Activated CD4-positive, alpha-beta T cell treated with anti-CD3 and anti-CD28 coated beads for 36 hours (primary cell): ENCODE measurements at regions of chr19 and their contacts with region 1.

Region 1: DNA sequence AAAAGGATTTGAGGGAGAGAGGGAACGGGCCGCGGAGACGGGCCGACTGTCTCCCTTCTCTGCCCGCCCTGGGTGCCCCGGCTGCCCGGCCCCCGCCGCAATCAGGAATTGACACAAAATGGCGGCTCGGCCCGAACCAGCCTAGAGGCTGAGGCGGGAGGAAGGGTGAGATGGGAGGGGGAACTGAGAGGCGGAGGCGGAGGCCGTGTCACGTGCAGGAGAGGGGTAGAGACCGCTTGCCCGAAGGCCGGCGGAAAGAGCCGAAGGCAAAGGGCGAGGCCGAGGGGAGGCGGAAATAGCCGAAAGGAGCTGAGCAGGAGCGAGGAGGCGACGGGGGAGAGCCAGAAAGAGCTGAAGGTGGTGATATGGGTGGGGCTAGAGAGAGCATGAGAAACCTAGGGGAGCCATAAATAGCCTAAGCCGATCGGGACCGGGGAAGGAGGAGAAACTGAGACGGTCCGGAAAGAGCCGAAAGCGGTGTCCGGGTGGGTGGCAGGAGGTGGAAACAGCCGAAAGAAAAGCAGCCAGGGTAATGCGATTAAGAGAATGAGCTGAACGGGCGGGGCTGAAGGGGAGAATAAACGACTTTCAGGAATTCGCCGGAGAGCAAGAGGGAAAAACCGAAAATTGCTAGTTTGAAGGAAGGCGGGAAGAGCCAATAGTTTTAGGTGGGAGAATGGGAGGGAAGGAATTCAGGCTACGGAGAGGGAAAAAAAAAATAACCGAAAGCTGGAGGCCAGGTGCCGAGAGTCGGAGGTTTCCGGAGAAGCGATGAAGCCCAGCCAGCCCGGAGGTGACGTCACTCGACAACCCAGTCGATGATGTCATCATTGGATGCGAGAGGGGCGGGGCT is at the start of gene ZC3H4:
- DNase-seq: peak; percentile 100
- ATAC-seq: peak; percentile 91
- H3K4me3 Mint-ChIP-seq: peak within 1 kb of the TSS; percentile 93
- H3K27ac Mint-ChIP-seq: peak within 1 kb of the TSS; percentile 100
- H3K4me1 Mint-ChIP-seq: peaks cover 24% of the 10 kb centered on the region
- H3K27me3 Mint-ChIP-seq: no peaks in the 10 kb centered on the region
- total RNA-seq, gene ZC3H4: 88.6 to 128 TPM

Region 2: DNA sequence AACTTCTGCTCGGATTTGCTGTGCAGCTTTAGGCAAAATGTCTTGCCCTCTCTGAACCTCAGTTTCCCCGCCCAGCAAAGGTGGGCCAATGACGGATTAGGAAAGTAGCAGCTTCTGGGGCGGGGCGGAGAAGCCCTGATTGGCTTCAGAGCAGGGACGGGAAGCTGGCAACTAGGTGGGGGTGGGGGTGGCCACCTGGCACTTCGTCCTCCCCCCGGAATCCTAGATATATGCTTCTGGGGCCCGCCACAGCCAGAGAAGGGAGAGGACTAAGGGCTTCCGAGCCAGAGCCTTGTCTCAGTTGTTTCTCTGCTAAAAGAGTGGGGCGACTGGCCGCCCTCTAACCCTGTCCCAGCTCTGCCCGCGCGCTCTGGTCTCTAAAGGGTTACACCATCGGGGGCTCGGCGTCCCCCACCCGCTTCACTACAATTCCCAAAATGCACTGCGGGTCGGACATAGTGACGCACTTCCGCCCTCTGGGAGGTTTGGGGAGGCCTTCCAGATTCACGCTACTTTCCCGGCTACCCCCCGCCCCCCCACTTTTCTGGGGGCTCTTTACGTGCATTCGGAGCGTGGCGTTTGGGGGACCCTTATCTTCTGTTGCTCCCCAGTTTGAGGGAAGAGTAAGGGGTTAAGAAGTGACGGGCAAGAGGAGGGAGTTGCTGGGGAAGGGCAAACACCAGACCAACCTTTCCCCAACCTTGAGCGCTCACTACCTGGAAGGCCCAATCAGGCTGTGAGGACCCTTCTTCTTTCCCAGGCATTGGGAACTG is 1226.6 kb before region 1 on chr19:
- CTCF ChIA-PET with region 1: no interaction called
- POLR2A ChIA-PET with region 1: no interaction called
- intact Hi-C with region 1: loop called in 1 of 2 experiments (anchors 5 kb)
- DNase-seq: peak; percentile 96
- ATAC-seq: peak; percentile 85
- H3K4me3 Mint-ChIP-seq: peak overlapping the region; percentile 85
- H3K27ac Mint-ChIP-seq: peak overlapping the region; percentile 95
- H3K4me1 Mint-ChIP-seq: peaks cover 17% of the 10 kb centered on the region
- H3K27me3 Mint-ChIP-seq: no peaks in the 10 kb centered on the region

Region 3: DNA sequence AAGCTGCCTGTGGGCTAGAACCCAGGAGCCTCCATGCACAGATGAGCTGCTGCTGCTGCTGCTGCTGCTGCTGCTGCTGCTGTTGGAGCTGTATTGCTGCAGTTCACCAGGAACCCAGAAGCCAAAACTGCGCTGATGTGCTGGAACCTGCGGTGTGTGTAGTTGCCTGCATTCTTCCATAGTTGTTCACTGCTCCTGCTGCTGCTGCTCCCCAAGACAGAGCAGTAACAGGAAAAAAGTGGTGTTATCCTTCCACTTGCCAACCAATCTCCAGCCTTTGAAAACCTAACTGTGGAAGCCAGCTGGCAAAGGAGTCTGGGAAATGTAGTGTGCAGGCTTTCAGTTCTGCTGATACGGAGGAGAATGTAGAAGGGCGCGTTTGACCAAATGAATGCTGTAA is 214.5 kb before region 1 on chr19:
- CTCF ChIA-PET with region 1: no interaction called
- POLR2A ChIA-PET with region 1: no interaction called
- intact Hi-C with region 1: no loop called
- DNase-seq: no peak
- ATAC-seq: no peak
- H3K4me3 Mint-ChIP-seq: no peak overlapping the region
- H3K27ac Mint-ChIP-seq: no peak overlapping the region
- H3K4me1 Mint-ChIP-seq: peaks cover 32% of the 10 kb centered on the region
- H3K27me3 Mint-ChIP-seq: no peaks in the 10 kb centered on the region

Region 4: GRCh38 chr19:47035127-47036096 is 77.8 kb before region 1 on chr19:
- CTCF ChIA-PET with region 1: interaction called, 3 read pairs
- POLR2A ChIA-PET with region 1: interaction called, 4 read pairs
- intact Hi-C with region 1: loop called in 1 of 2 experiments (anchors 1 kb)
- DNase-seq: peak; percentile 96
- ATAC-seq: peak; percentile 93
- H3K4me3 Mint-ChIP-seq: peak overlapping the region; percentile 73
- H3K27ac Mint-ChIP-seq: peak overlapping the region; percentile 80
- H3K4me1 Mint-ChIP-seq: peaks cover 22% of the 10 kb centered on the region
- H3K27me3 Mint-ChIP-seq: peaks cover 4% of the 10 kb centered on the region

Region 5: GRCh38 chr19:47130591-47131227 is 17.5 kb after region 1 on chr19 and contains the start of gene SAE1:
- CTCF ChIA-PET with region 1: interaction called, 16 read pairs
- POLR2A ChIA-PET with region 1: interaction called, 15 read pairs
- intact Hi-C with region 1: loop called (anchors 1 to 2 kb)
- DNase-seq: peak; percentile 95
- ATAC-seq: peak; percentile 89
- H3K4me3 Mint-ChIP-seq: peak within 1 kb of the TSS; percentile 99
- H3K27ac Mint-ChIP-seq: peak within 1 kb of the TSS; percentile 97
- H3K4me1 Mint-ChIP-seq: peaks cover 41% of the 10 kb centered on the region
- H3K27me3 Mint-ChIP-seq: no peaks in the 10 kb centered on the region
- total RNA-seq, gene SAE1: 143 to 156 TPM

Region 6: DNA sequence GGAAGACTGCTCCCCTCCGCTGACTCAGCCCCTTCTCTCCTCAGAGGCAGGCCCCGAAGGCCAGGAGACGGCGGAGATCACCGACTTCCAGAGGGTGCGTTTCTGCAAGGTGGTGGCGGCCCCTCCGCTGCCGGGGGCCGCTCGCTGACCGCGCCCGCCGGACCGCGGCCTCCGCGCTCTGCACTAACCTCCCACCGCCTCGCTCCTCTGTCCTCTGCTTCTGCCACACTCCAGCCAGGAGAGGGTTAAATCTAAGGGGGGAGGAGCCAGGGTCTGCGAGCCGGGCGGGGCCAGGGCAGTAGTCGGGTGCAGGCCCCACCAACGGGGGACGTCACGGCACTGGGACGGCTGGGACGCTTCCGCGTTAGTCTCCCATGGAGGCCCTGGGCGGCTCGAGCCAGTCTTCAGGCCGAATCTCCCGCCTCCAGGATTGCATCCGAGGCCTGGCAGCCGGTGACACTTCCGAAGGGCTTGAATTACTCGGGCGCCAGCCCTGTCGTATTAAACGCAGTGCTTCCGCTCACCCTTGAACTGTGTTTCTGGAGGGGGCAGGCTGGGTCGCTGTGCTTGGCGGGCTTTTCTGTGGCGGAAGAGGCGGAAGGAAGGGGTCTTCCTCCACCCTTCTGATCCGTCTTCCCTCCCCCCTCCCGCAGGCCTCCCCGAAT is 160.2 kb after region 1 on chr19:
- CTCF ChIA-PET with region 1: no interaction called
- POLR2A ChIA-PET with region 1: interaction called, 6 read pairs
- intact Hi-C with region 1: loop called in 1 of 2 experiments (anchors 1 kb)
- DNase-seq: peak; percentile 94
- ATAC-seq: peak; percentile 77
- H3K4me3 Mint-ChIP-seq: peak overlapping the region; percentile 86
- H3K27ac Mint-ChIP-seq: peak overlapping the region; percentile 93
- H3K4me1 Mint-ChIP-seq: peaks cover 22% of the 10 kb centered on the region
- H3K27me3 Mint-ChIP-seq: no peaks in the 10 kb centered on the region

Region 7: DNA sequence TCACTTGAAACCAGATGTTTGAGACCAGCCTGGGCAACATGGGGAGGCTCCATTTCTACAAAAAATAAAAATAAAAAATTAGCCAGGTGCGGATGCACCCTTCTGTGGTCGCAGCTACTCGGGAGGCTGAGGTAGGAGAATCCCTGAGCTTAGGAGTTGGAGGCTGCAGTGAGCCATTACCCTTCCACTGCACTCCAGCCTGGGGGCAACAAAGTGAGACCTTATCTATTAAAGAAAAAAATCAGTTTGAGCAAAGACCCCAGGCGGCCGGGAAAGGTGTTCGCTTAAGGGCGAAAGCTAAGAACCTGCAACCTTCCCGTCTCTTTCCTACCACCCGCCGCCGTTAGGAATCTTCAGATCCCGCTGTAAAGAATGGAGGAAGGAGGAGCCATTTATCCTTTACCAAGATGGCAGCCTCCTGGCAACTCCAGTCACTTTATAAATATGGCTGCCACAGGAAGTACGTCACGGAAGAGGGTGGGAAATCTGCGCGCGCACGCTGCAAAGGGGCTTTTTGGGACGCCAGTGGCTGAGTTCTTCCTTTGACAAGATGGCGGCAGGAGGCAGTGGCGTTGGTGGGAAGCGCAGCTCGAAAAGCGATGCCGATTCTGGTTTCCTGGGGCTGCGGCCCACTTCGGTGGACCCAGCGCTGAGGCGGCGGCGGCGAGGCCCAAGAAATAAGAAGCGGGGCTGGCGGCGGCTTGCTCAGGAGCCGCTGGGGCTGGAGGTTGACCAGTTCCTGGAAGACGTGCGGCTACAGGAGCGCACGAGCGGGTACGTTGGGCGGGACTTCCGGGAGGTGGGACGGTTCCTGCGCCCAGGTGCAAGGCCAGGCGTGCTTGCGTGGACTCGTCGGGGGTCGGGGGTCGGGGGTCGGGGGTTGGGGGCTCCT is 632.0 kb after region 1 on chr19 and contains the start of gene NOP53:
- CTCF ChIA-PET with region 1: no interaction called
- POLR2A ChIA-PET with region 1: no interaction called
- intact Hi-C with region 1: loop called in 1 of 2 experiments (anchors 5 kb)
- DNase-seq: peak; percentile 98
- ATAC-seq: peak; percentile 71
- H3K4me3 Mint-ChIP-seq: peak within 1 kb of the TSS; percentile 98
- H3K27ac Mint-ChIP-seq: peak within 1 kb of the TSS; percentile 99
- H3K4me1 Mint-ChIP-seq: peaks cover 44% of the 10 kb centered on the region
- H3K27me3 Mint-ChIP-seq: no peaks in the 10 kb centered on the region
- total RNA-seq, gene NOP53: 317 to 374 TPM